A549 (cell line): ENCODE measurements at regions of chr9 and their contacts with region 1.

Region 1: DNA sequence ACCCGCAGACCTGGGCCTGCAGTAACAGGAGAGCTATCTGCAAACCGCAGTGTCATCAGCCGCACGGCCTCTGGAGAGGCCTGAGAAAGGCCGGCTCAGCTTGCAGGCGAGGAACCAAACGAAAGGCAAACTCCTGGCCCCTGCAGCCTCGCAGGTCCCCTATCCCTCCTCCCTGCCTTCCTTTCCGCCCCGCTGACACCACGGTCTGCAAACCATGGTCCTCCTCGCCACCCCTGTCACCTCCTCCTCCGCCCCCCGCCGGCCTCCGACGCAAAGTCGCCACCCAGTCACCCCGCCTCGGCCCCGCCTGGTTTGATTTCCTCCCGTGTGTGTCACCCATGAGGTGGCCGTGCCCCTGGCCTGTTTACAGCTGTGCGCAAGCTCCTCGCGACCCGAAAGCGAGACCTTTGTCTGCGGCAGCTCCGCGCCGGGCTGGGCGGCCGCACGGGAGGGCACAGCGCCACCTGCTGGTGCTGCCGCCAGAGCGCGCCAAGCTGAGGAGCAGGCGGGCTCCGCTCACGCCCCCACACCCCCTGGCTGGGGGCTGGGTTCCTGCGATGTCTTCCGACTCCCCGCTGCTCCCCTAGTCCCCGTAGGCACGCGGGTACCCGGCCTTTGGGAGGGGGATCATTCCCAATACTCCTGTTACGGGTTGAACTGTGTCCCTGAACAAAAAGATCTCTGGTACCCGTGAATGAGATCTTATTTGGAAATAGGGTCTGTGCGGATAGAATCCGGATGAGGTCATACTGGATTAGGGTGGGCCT is 19.4 kb downstream of the GBGT1 start:
- DNase-seq: peak; percentile 80 to 86
- ATAC-seq: peak; percentile 28 to 81
- H3K4me3 ChIP-seq: peak overlapping the region; percentile 39
- H3K27ac ChIP-seq: peak overlapping the region; percentile 60 to 86
- H3K4me1 ChIP-seq: peaks cover 39% of the 10 kb centered on the region
- CTCF ChIP-seq: peak; percentile 97
- EP300 ChIP-seq: no peak
- POLR2A ChIP-seq: no peak
- RAD21 ChIP-seq: peak; percentile 80 to 92

Region 2: GRCh38 chr9:132283863-132284262 is 860.5 kb before region 1 on chr9:
- CTCF ChIA-PET with region 1: no interaction called
- POLR2A ChIA-PET with region 1: no interaction called
- DNase-seq: no peak
- ATAC-seq: peak in 1 of 2 experiments; percentile 43; a peak in 3 of 6 replicates
- H3K4me3 ChIP-seq: no peak overlapping the region
- H3K27ac ChIP-seq: no peak overlapping the region
- H3K4me1 ChIP-seq: no peaks in the 10 kb centered on the region
- CTCF ChIP-seq: no peak
- EP300 ChIP-seq: no peak
- POLR2A ChIP-seq: no peak
- RAD21 ChIP-seq: no peak

Region 3: DNA sequence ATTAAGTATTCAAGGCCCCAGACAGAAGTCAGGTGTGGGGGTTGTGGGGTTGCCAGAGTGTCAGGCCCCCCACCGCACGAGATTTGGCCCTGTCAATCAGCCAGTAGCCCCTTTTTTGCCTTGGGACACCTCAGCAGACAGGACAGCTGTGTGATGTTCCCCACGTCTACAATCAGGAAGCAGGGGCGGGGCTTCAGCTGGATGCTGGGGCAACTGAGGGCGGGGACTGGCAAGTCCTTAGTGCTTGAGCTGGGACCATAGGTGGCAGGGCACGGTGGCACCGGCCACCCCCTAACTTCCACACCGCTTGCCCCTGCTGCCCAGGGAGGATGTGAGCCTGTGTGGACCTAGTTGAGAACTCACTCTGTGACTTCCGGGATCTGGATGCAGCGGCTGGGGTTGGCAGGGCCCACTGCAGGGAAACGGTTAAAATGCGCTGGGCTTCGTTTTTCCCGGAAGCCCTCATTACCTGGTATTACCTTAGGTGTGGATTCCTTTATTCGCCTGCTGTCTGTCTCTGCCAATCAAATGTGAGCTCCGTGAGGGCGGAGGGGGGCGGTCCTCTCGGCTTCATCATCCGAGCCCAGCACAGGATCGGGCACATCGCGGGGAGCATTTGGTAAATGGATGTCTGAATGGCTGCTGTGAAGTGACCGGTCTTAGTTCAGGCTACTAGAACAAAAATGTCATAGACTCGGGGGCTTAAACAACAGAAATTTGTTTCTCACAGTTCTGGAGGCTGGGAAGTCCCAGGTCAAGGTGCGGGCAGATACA is 121.0 kb before region 1 on chr9:
- CTCF ChIA-PET with region 1: interaction called, 17 read pairs
- POLR2A ChIA-PET with region 1: no interaction called
- DNase-seq: peak in 1 of 2 experiments; percentile 22
- ATAC-seq: peak in 1 of 2 experiments; percentile 30; a peak in 3 of 6 replicates
- H3K4me3 ChIP-seq: no peak overlapping the region
- H3K27ac ChIP-seq: no peak overlapping the region
- H3K4me1 ChIP-seq: no peaks in the 10 kb centered on the region
- CTCF ChIP-seq: no peak
- EP300 ChIP-seq: no peak
- POLR2A ChIP-seq: no peak
- RAD21 ChIP-seq: no peak

Region 4: DNA sequence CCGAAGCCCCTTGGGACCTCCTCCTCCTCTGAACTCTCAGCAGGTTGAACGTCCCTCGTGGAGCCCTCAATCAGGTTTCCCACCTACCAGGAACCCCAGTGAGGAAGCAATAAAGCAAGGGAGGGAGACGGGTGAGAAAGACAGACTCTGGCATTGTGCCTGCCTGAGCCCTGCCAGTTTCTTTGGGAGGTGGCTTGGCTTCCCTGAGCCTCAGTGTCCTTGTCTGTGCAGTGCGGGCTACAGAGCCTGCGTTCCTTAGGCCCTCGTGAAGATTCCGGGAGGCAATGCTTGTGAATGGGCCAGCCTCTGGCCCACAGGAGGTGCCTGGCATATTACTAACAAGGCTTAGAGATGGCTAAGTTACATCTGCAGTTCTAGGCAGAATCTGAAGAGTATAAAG is 101.6 kb before region 1 on chr9:
- CTCF ChIA-PET with region 1: interaction called, 24 read pairs
- POLR2A ChIA-PET with region 1: no interaction called
- DNase-seq: no peak
- ATAC-seq: no peak
- H3K4me3 ChIP-seq: no peak overlapping the region
- H3K27ac ChIP-seq: no peak overlapping the region
- H3K4me1 ChIP-seq: no peaks in the 10 kb centered on the region
- CTCF ChIP-seq: no peak
- EP300 ChIP-seq: no peak
- POLR2A ChIP-seq: no peak
- RAD21 ChIP-seq: no peak

Region 5: DNA sequence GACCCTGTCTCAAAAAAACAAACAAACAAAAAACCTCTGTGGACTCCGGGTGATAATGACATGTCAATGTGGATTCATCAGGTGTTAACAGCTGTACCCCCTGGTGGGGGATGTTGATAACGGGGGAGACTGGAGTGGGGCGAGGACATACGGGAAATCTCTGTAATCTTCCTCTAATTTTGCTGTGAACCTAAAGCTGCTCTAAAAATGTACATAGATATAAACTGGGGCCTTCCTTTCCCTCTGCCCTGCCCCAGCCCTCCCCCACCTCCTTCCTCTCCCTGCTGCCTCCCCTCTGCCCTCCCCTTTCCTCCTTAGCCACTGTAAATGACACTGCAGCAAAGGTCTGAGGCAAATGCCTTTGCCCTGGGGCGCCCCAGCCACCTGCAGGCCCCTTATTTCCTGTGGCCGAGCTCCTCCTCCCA is 83.9 kb before region 1 on chr9:
- CTCF ChIA-PET with region 1: interaction called, 45 read pairs
- POLR2A ChIA-PET with region 1: no interaction called
- DNase-seq: no peak
- ATAC-seq: no peak
- H3K4me3 ChIP-seq: no peak overlapping the region
- H3K27ac ChIP-seq: no peak overlapping the region
- H3K4me1 ChIP-seq: 0 out of 3 replicates have a peak, but pooled peaks cover 3% of the 10 kb centered on the region
- CTCF ChIP-seq: no peak
- EP300 ChIP-seq: no peak
- POLR2A ChIP-seq: no peak
- RAD21 ChIP-seq: no peak

Region 6: GRCh38 chr9:133160742-133161546 is 16.6 kb after region 1 on chr9:
- CTCF ChIA-PET with region 1: interaction called, 34 read pairs
- POLR2A ChIA-PET with region 1: interaction called, 7 read pairs
- DNase-seq: peak; percentile 83 to 94
- ATAC-seq: peak; percentile 81 to 84
- H3K4me3 ChIP-seq: no peak overlapping the region
- H3K27ac ChIP-seq: no peak overlapping the region
- H3K4me1 ChIP-seq: peaks cover 21% of the 10 kb centered on the region
- CTCF ChIP-seq: peak; percentile 47
- EP300 ChIP-seq: no peak
- POLR2A ChIP-seq: no peak
- RAD21 ChIP-seq: peak in 1 of 2 experiments; percentile 33; a peak in 1 of 5 replicates

Region 7: DNA sequence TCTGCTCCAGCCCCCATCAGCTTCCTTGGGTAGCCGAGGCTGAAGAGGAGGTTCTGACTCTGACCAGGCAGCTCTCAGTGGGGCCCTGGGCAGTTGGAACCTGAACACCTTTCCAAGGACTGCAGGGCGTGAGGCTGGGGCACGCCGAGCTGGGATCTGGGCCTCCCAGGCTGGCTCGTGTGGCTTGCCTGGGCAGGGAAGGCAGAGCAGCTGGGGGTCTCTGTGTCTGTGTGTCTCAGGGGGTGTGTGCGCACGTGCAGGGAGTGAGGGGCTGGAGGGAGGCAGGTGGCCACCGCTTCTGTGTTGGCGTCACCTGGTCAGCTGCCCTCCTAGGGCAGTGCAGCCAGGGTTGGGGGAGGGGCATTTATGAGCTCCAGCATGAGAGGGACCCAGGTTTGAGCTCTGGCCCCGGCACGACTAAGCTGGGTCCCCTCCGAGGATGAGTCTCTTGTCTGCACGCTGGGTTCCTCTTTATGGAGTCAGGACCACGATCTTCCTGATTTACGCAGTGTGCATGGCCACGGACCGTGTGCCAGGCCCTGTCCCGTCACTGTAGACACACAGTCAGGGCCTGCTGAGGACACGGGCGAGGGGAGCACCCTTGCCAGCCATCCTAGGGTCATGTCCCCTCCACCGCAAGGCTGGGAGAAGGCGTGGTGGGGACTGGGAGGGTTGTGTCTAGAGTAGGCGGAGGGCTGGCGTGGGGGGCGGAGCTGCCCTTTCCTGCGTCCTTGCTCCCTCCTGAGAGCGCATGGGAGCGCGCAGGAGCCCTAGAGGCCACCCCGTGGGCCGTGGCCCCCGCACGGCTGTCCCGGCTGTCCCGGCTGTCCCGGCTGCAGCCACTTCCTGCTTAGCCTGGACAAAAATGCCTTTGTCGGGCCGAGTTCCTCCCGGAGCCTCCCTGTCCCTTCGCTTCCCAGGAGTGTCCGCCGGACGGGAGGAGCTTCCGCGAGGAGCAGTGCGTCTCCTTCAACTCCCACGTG is 394.8 kb after region 1 on chr9:
- CTCF ChIA-PET with region 1: no interaction called
- POLR2A ChIA-PET with region 1: no interaction called
- DNase-seq: no peak
- ATAC-seq: no peak
- H3K4me3 ChIP-seq: no peak overlapping the region
- H3K27ac ChIP-seq: no peak overlapping the region
- H3K4me1 ChIP-seq: no peaks in the 10 kb centered on the region
- CTCF ChIP-seq: no peak
- EP300 ChIP-seq: no peak
- POLR2A ChIP-seq: no peak
- RAD21 ChIP-seq: no peak